Body of pancreas (tissue), 4 donors: ENCODE measurements at regions of chr11 and their contacts with region 1.

Region 1: DNA sequence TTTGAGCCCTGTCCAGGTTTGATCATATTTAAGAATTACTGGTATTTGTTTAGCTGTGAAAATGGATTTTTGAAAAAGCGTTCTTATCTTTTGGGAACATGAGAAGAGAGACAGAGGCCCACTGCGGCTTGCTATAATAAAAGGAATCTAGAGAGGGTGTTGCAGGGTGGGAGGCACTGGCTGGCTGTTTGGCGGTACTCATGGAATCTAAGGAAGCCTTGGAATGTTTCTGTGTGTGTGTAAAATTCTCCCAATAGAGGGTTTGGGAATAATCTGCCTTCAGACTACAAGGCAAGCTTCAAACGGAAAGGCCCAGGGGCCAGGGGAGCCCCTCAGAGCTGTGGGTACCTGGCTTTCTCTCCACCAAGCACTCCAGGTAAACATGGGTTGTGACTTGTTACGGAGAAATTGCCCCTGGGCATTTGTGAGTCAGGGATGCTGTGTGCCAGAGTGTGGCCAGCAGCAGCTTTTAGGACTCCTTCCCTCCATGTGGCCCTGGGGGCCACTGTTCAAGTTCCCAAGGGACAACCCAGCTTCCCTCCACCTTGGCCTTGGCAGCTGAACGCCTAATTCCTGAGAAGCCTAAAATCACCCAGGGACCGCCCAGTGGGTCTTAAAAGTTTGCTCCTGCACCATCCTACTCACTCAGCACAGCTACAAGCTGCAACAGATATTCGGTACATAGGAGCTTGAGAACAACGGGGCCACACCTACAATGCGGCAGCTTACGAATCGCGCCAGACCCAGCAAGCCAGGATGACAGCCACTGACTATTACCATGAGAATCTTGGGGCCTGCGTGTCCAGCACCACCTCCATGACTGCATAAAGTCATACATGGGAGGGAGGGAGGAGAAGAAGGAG is 14.1 kb upstream of the SYT8 start:
- DNase-seq: no peak
- ATAC-seq: no peak
- H3K4me3 ChIP-seq: no peak overlapping the region
- H3K27ac ChIP-seq: no peak overlapping the region
- H3K4me1 ChIP-seq: peaks cover 21% of the 10 kb centered on the region
- H3K27me3 ChIP-seq: no peaks in the 10 kb centered on the region
- CTCF ChIP-seq: no peak
- POLR2A ChIP-seq: no peak

Region 2: GRCh38 chr11:1694064-1694845 is 126.4 kb before region 1 on chr11:
- intact Hi-C with region 1: loop called (anchors 5 kb)
- DNase-seq: peak; percentile 89 to 91 (median 90)
- ATAC-seq: peak; percentile 95
- H3K4me3 ChIP-seq: no peak overlapping the region
- H3K27ac ChIP-seq: peak overlapping the region in 2 of 4 donors; percentile 44 to 64
- H3K4me1 ChIP-seq: peaks cover 15% of the 10 kb centered on the region
- H3K27me3 ChIP-seq: no peaks in the 10 kb centered on the region
- CTCF ChIP-seq: peak; percentile 85 to 95 (median 92)
- POLR2A ChIP-seq: no peak

Region 3: GRCh38 chr11:1765871-1766718 is 54.6 kb before region 1 on chr11:
- intact Hi-C with region 1: loop called (anchors 5 kb)
- DNase-seq: peak in 2 of 4 donors; percentile 5 to 7
- ATAC-seq: no peak
- H3K4me3 ChIP-seq: no peak overlapping the region
- H3K27ac ChIP-seq: no peak overlapping the region
- H3K4me1 ChIP-seq: peaks cover 24% of the 10 kb centered on the region
- H3K27me3 ChIP-seq: no peaks in the 10 kb centered on the region
- CTCF ChIP-seq: no peak
- POLR2A ChIP-seq: no peak